IMR-90 (cell line): ENCODE measurements at regions of chrX and their contacts with region 1.

Region 1: GRCh38 chrX:64169988-64170387 is 35.5 kb downstream of the AMER1 start:
- DNase-seq: no peak
- ATAC-seq: no peak
- H3K4me3 ChIP-seq: no peak overlapping the region
- H3K27ac ChIP-seq: no peak overlapping the region
- H3K4me1 ChIP-seq: no peaks in the 10 kb centered on the region
- H3K27me3 ChIP-seq: no peaks in the 10 kb centered on the region
- CTCF ChIP-seq: no peak
- POLR2A ChIP-seq: no peak
- RAD21 ChIP-seq: no peak

Region 2: GRCh38 chrX:64230123-64230970 is 60.4 kb after region 1 on chrX and contains the start of gene ASB12:
- CTCF ChIA-PET with region 1: no interaction called
- POLR2A ChIA-PET with region 1: no interaction called
- dilution Hi-C with region 1: no loop called
- in situ Hi-C with region 1: no loop called
- intact Hi-C with region 1: loop called (anchors 10 kb)
- DNase-seq: no peak
- ATAC-seq: no peak
- H3K4me3 ChIP-seq: no peak within 1 kb of the TSS
- H3K27ac ChIP-seq: no peak within 1 kb of the TSS
- H3K4me1 ChIP-seq: no peaks in the 10 kb centered on the region
- H3K27me3 ChIP-seq: no peaks in the 10 kb centered on the region
- CTCF ChIP-seq: no peak
- POLR2A ChIP-seq: no peak
- RAD21 ChIP-seq: no peak
- total RNA-seq, gene ASB12: not detected in 2 replicates